ENCODE measurements at regions of chr4 and their contacts with region 1.

Region 1: GRCh38 chr4:84503495-84504437 is 4.7 kb upstream of the NKX6-1 start:
- DNase-seq: peak; percentile 44
- ATAC-seq: peak; percentile 83
- H3K4me3 Mint-ChIP-seq: no peak overlapping the region
- H3K27ac Mint-ChIP-seq: no peak overlapping the region
- H3K4me1 Mint-ChIP-seq: peaks cover 6% of the 10 kb centered on the region
- H3K27me3 Mint-ChIP-seq: peaks cover 77% of the 10 kb centered on the region

Region 2: GRCh38 chr4:83503974-83504373 is 999.8 kb before region 1 on chr4:
- CTCF ChIA-PET with region 1: no interaction called
- POLR2A ChIA-PET with region 1: no interaction called
- intact Hi-C with region 1: loop called in 1 of 2 experiments (anchors 10 kb)
- DNase-seq: peak; percentile 28
- ATAC-seq: peak; percentile 51
- H3K4me3 Mint-ChIP-seq: no peak overlapping the region
- H3K27ac Mint-ChIP-seq: peak overlapping the region; percentile 32
- H3K4me1 Mint-ChIP-seq: peaks cover 12% of the 10 kb centered on the region
- H3K27me3 Mint-ChIP-seq: no peaks in the 10 kb centered on the region

Region 3: GRCh38 chr4:83771113-83771705 is 732.6 kb before region 1 on chr4:
- CTCF ChIA-PET with region 1: no interaction called
- POLR2A ChIA-PET with region 1: no interaction called
- intact Hi-C with region 1: loop called in 1 of 2 experiments (anchors 10 kb)
- DNase-seq: peak; percentile 30
- ATAC-seq: no peak
- H3K4me3 Mint-ChIP-seq: no peak overlapping the region
- H3K27ac Mint-ChIP-seq: no peak overlapping the region
- H3K4me1 Mint-ChIP-seq: no peaks in the 10 kb centered on the region
- H3K27me3 Mint-ChIP-seq: peaks cover 9% of the 10 kb centered on the region

Region 4: DNA sequence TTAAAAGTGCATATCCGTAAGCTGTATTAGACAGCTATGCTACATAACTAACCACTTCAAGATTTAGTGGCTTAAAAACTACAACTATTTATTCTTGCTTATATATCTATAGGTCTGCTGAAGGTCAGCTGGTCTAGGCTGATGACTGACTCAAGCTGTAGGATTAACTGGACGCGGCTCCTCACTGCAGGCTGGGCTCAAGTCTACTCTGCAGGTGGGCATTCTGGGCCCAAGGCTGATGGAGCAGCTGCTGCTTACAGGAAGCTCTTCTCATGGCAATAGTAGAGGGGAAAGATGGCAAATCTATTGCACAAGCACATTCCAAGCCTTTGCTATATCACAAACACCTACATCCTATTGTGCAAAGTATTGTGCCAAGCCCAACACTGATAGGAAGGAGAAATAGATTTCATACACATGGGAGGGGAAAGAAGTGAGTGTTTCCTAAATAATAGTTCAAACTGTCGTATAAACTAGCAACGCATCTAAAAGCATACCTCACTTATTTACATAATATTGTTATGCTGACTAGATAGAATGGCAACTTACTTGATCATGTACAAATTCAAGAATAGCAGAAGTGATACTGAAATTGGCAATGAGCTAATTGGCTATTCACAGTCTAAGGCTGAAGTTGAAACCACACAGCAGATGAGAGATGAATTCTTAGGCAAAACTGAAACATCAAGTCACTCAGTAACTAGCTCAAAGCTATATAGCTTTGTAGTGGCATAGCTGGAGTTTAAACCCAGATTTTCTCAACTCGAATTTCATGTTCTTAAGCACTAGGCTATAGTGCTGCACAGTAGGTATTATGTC is 268.4 kb before region 1 on chr4:
- CTCF ChIA-PET with region 1: no interaction called
- POLR2A ChIA-PET with region 1: no interaction called
- intact Hi-C with region 1: no loop called
- DNase-seq: no peak
- ATAC-seq: no peak
- H3K4me3 Mint-ChIP-seq: no peak overlapping the region
- H3K27ac Mint-ChIP-seq: no peak overlapping the region
- H3K4me1 Mint-ChIP-seq: no peaks in the 10 kb centered on the region
- H3K27me3 Mint-ChIP-seq: no peaks in the 10 kb centered on the region

Region 5: DNA sequence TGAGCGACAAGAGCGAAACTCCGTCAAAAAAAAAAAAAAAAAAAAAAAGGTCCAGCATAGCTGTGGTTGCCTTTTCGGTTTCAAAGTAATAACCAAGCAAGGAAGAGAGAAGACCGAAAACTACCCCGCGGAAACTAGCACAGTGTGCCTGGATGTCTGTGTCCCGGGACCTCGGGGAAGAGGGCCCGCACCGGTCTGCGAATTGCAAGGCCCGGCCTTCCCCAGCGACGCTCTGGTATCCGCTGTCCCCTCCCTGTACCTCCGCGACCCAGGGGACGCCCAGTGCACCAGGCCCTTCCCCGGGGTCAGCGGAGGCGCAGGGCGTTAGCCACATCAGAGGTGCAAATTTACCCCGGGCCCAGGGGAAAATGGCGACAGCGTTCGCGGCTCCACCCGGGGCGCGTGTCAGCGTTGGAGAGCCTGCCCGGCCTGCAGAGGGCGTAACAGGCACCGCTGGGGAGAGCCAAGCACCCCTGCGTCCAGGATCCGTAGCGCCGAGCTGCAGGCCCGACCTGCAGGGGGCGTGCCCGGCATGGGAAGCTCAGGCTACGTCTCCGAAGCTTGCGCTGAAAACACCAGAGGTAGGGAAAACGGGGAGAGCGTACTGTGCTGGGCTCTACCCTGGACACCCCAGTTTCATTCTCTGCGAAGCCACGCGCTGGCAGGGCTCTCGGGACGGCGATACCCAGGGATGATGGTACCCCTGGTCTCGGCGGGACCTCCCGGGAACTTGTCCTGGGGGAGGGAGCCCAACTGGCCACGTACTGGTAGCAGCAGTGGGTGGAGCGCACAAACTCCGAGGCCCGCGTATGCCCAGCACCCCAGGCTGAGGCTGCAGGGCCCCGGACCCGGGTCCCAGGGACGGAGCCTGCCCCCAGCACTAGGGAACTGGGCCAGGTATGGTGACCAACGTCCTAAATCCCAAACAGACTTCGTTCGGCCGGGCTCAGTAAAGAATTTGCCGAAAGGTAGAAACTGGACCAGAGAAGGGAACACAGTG is 20.9 kb before region 1 on chr4:
- CTCF ChIA-PET with region 1: interaction called, 3 read pairs
- POLR2A ChIA-PET with region 1: no interaction called
- intact Hi-C with region 1: loop called (anchors 1 to 2 kb)
- DNase-seq: peak; percentile 61
- ATAC-seq: peak; percentile 42
- H3K4me3 Mint-ChIP-seq: no peak overlapping the region
- H3K27ac Mint-ChIP-seq: no peak overlapping the region
- H3K4me1 Mint-ChIP-seq: peaks cover 13% of the 10 kb centered on the region
- H3K27me3 Mint-ChIP-seq: peaks cover 85% of the 10 kb centered on the region

Region 6: DNA sequence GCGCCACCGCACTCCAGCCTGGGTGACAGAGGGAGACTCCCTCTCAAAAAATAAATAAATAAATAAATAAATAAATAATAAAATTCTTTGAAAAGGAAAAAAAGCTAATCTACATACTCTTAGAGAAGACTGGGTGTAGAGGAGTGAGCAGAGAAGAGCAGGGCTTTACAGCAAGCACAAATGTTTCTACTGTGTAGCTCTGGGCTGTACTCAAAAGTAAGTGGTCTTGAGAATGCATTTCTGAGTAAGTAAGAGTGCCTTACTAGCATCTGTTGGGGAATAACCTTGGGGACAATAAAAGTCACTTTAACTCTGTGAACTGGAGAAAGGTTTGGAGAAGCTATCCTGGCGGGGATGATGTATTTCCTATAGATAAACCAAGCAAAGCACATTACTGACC is 277.0 kb after region 1 on chr4:
- CTCF ChIA-PET with region 1: no interaction called
- POLR2A ChIA-PET with region 1: no interaction called
- intact Hi-C with region 1: no loop called
- DNase-seq: no peak
- ATAC-seq: no peak
- H3K4me3 Mint-ChIP-seq: no peak overlapping the region
- H3K27ac Mint-ChIP-seq: no peak overlapping the region
- H3K4me1 Mint-ChIP-seq: no peaks in the 10 kb centered on the region
- H3K27me3 Mint-ChIP-seq: no peaks in the 10 kb centered on the region

Region 7: DNA sequence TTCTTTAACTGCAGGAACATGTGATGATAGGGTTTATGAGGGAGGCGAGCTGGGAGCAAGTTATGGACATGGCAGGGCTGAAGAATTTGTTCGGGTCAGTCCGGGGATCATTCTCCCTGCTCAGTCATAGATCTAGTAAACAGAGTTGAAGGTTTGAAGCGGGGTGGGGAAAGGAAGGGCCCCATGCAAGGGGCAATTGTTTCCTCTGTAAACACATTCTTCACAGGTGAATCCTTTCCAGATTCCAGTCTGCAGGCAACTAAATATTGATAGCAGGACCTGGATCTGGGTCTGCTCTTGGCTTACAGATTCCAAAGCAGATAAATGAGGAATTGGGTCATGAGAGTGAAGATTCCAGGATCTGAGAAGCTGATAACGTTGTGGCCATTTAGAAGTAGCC is 926.9 kb after region 1 on chr4:
- CTCF ChIA-PET with region 1: no interaction called
- POLR2A ChIA-PET with region 1: no interaction called
- intact Hi-C with region 1: no loop called
- DNase-seq: no peak
- ATAC-seq: no peak
- H3K4me3 Mint-ChIP-seq: no peak overlapping the region
- H3K27ac Mint-ChIP-seq: no peak overlapping the region
- H3K4me1 Mint-ChIP-seq: no peaks in the 10 kb centered on the region
- H3K27me3 Mint-ChIP-seq: peaks cover 6% of the 10 kb centered on the region